ENCODE measurements at regions of chr13 and their contacts with region 1.

Region 1: DNA sequence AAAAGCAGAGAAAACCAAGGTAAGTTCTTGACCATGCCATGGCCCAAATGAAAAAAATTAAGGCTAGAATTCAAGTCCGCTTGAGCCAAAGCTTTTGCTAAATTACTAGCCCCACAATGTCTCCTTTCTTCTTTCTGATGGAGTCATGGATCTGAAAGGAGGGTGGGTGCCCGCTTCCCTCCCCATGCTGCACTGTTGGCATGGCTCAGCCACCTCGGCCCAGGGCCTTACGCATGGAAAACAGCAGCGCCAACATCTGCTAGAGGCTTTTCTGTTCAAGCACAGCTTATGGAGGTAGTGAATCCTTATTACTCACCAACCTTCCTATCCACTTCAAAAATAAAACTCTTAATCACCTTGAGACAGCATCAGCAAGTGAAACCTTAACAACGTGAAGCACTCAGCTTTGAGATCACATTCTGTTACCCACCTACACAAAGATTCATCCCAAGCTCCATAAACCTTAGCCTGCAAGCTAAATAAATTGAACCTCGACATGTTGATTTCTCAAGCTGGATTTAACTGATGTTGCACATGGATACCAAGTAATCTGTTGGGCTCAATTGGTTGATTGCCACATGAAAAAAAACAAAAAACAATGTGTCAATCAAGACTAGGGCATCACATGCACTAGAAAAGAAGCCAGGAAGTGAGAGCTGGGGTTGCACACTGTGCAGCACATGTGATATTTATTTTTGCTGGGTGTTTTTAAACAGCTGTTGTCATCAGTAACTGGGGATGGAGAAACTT is 43.4 kb downstream of the TPT1 start:
- DNase-seq: no peak
- ATAC-seq: no peak
- H3K4me3 ChIP-seq: no peak overlapping the region
- H3K27ac ChIP-seq: no peak overlapping the region
- H3K4me1 ChIP-seq: peaks cover 13% of the 10 kb centered on the region
- H3K27me3 ChIP-seq: peaks cover 0 to 7% of the 10 kb centered on the region in 2 experiments; a peak in 1 of 5 replicates
- CTCF ChIP-seq: no peak
- EP300 ChIP-seq: no peak
- POLR2A ChIP-seq: no peak
- RAD21 ChIP-seq: no peak

Region 2: DNA sequence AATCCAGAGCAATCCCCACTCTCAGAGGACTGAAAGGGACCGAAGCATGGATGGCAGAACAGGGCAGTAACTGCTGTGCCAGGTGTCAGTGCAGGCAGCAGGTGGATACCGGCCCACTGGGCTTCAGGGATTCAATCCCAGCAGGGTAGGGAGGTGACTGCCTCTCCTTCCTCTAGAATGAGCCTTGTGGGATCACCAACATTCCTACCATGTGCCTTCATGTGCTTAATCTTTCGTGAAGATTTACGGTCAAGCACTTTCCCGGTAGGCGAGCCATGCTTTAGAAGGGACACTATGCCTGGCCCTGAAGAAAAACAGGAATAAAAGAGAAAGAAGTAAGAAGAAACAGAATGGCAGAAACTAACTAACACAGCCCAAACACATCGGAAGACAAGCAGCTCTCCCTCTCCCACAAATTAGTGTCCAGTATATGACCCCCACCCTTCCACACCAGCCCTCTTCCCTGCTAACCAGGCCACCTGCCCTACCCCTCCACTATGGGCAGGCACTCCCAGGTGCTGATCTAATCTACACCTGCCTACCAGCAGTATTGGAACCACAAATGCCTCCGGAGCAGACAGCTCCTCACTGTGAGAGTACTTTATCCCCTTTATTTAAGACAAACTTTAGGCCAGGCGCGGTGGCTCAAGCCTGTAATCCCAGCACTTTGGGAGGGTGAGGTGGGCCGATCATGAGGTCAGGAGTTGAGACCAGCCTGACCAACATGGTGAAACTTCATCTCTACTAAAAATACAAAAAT is 470.9 kb before region 1 on chr13:
- CTCF ChIA-PET with region 1: no interaction called
- POLR2A ChIA-PET with region 1: no interaction called
- in situ Hi-C with region 1: no loop called
- intact Hi-C with region 1: loop called (anchors 5 kb)
- DNase-seq: no peak
- ATAC-seq: no peak
- H3K4me3 ChIP-seq: no peak overlapping the region
- H3K27ac ChIP-seq: no peak overlapping the region
- H3K4me1 ChIP-seq: no peaks in the 10 kb centered on the region
- H3K27me3 ChIP-seq: 0 out of 5 replicates have a peak, but pooled peaks cover 0 to 7% of the 10 kb centered on the region in 2 experiments
- CTCF ChIP-seq: no peak
- EP300 ChIP-seq: no peak
- POLR2A ChIP-seq: no peak
- RAD21 ChIP-seq: no peak

Region 3: GRCh38 chr13:45310341-45311125 is 12.9 kb after region 1 on chr13:
- CTCF ChIA-PET with region 1: no interaction called
- POLR2A ChIA-PET with region 1: no interaction called
- in situ Hi-C with region 1: no loop called
- intact Hi-C with region 1: no loop called
- DNase-seq: no peak
- ATAC-seq: peak; percentile 20
- H3K4me3 ChIP-seq: peak overlapping the region in 1 of 3 experiments; percentile 58; a peak in 2 of 6 replicates
- H3K27ac ChIP-seq: no peak overlapping the region
- H3K4me1 ChIP-seq: peaks cover 15% of the 10 kb centered on the region
- H3K27me3 ChIP-seq: no peaks in the 10 kb centered on the region; a peak in 2 of 5 replicates
- CTCF ChIP-seq: no peak
- EP300 ChIP-seq: no peak
- POLR2A ChIP-seq: no peak
- RAD21 ChIP-seq: no peak